ENCODE measurements at regions of chr20 and their contacts with region 1.

Region 1: DNA sequence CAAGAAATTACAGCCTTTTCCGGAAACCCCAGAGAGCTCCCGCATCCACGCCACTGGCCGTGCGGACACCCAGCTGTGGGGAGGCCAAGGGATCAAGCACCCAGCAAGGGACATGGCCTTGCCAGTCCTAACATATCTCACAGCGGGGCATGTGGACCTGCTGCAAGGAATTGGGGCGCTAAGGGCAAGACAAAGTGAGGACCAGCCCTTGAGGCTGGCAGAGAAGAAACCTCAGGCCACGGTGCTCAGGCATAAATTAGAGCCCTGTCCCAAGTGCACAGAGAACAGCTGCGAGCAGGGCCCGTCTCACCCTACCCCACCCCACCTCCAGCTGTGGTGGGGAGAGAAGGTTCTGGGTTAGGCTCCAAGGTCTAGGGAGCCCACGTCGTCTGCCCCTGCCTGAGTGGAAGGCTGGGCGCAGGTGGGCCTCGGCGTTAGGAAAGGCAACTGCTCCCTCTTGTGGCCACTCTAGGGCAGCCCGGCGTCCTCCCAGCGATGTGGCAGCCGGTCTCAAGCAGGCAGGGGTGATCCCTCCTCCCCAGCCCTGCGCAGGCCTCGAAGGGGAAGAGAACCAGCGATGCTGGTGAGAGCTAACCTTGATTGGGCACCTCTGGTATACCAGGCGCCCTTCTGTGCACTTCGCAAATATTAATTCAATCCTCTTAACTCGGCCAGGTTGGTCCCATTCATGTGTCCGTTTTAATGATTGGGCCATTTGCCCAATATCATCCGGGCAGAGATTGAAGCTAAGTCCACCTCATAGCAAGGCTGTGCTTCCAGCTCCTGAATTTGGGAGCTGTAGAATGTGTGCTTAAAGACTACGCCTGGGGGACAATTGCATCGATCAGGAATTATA is 235.8 kb downstream of the NFATC2 start:
- DNase-seq: peak; percentile 77
- ATAC-seq: peak; percentile 99
- H3K4me3 Mint-ChIP-seq: no peak overlapping the region
- H3K27ac Mint-ChIP-seq: no peak overlapping the region
- H3K4me1 Mint-ChIP-seq: peaks cover 3% of the 10 kb centered on the region
- H3K27me3 Mint-ChIP-seq: peaks cover 16% of the 10 kb centered on the region

Region 2: DNA sequence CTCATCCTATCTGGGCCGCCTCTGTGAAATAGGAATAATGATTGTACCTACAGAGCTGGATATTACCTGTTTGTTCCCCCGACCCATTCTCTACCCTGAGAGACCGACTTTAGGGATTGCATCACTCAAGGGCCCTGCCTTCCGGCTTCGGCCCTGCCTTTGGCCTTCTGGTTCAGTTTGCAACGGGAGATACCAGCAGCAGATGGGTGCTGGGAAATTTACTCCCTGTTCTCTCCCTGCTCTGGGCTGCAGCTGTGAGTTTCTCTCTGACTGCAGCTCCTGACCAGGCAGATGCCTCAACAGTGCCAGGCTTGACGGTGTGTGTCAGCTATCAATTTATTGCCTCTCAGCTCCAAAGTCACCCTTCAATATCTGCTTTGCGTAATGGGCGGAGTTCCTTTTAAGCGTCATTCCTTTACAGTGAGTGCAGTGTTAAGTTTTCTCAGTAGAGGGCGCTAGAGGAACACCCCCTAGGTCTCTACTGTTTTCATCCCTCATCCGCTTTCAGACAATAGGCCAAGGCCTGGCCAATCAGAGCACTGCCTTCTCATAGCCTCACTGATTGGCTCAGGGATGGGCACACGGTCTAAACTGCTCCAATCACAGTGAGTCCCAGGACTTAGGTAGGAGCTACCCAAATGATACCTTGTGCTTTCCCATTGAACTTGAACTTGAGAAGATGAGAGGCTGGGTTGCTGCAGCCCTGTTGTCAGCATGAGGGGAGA is 313.8 kb before region 1 on chr20:
- CTCF ChIA-PET with region 1: interaction called, 87 read pairs
- POLR2A ChIA-PET with region 1: no interaction called
- DNase-seq: peak; percentile 64
- ATAC-seq: peak; percentile 98
- H3K4me3 Mint-ChIP-seq: no peak overlapping the region
- H3K27ac Mint-ChIP-seq: no peak overlapping the region
- H3K4me1 Mint-ChIP-seq: no peaks in the 10 kb centered on the region
- H3K27me3 Mint-ChIP-seq: peaks cover 5% of the 10 kb centered on the region

Region 3: GRCh38 chr20:51326201-51326819 is 19.6 kb after region 1 on chr20:
- CTCF ChIA-PET with region 1: interaction called, 14 read pairs
- POLR2A ChIA-PET with region 1: interaction called, 4 read pairs
- DNase-seq: no peak
- ATAC-seq: no peak
- H3K4me3 Mint-ChIP-seq: no peak overlapping the region
- H3K27ac Mint-ChIP-seq: no peak overlapping the region
- H3K4me1 Mint-ChIP-seq: no peaks in the 10 kb centered on the region
- H3K27me3 Mint-ChIP-seq: peaks cover 2% of the 10 kb centered on the region

Measured in activated CD8-positive, alpha-beta T cell treated with anti-CD3 and anti-CD28 coated beads, Interleukin-2, amount 10 ng/mL, durations not matched to agents 7 days and 5 days (primary cell).